AG04450 (cell line): ENCODE measurements at regions of chr6 and their contacts with region 1.

Region 1: DNA sequence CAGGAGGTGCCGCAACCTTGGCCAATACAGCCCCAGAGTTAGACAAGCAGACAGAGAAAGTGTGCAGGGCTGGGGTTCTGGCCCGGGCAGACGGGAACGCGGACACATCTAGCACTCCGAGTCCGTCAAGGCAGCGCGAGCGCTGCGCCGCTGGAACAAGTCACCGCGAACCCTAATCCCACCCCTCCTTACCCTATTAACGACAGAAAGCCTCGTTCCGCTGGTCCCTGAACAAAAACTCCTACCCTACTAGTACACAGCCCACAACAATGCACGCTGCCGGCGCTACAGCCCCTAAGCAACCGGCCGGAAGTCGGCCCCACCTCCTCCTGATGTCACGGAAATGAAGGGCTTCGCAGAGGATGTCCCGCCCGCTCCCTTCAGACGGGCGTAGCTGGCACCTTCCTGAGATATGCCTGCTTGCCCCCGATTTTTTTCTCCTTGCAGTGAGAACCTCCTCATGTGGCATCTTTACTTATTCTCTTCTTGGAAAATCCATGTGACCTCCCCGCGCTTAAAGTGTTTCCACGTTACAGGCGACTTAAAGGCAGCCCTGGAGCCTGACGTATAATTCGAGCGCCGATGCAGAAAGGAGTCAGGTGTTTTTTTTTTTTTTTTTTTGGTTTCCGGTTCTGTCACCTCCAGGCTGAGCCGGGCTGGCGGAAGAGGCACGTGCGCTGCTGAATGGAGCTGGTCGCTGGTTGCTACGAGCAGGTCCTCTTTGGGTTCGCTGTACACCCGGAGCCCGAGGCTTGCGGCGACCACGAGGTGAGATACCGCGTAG is at the starts of genes C6orf52 and PAK1IP1:
- DNase-seq: peak; percentile 80
- H3K4me3 ChIP-seq: peak within 1 kb of the TSS; percentile 77
- H3K27ac ChIP-seq: peak within 1 kb of the TSS; percentile 95
- H3K27me3 ChIP-seq: no peaks in the 10 kb centered on the region
- CTCF ChIP-seq: no peak
- polyA plus RNA-seq, gene C6orf52: 0.63 and 0.74 TPM in 2 replicates
- polyA plus RNA-seq, gene PAK1IP1: 18.7 and 24.2 TPM in 2 replicates

Region 2: GRCh38 chr6:10487668-10488327 is 206.7 kb before region 1 on chr6:
- CTCF ChIA-PET with region 1: no interaction called
- POLR2A ChIA-PET with region 1: interaction called, 10 read pairs
- DNase-seq: no peak
- H3K4me3 ChIP-seq: no peak overlapping the region
- H3K27ac ChIP-seq: no peak overlapping the region
- H3K27me3 ChIP-seq: peaks cover 4% of the 10 kb centered on the region
- CTCF ChIP-seq: no peak

Region 3: DNA sequence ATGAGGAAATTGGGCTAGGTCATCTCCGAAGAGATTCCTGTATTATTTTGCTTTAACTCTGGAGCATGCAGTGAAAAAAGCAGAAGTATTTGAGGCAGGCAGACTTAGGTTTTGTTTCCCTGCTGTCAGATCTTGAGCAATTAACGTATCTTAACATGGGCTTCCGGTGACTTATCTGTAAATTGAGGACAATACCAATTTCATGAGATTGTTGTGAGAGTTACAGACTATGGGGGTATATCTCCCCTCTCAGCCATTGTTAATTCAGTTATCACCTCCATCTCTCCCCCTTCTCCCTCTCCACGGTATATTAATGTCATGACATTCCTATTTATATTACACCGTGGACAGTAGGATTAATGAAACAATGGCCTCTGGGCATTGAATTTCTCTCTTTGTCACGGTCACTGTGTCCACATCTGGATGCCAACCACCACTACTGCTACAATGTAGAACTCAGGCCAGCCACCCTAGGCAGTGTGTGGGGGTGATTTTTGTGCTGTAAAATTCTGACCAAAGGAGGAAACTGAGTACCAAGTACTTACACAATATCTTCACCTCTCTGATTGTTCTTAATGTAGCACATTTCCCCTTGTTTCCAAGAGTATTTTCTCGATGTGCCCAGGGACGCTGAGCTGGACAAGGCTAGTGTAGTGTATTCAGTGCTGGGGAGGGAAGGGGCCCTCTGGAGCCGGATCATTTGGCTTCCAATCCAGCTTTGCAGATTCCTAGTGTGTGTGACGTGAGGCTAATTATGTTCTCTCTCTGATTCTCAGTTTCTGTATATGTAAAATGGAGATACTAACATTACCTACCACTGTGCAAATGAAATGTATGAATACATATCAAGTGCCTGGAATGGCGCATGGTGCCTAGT is 96.2 kb before region 1 on chr6:
- CTCF ChIA-PET with region 1: no interaction called
- POLR2A ChIA-PET with region 1: no interaction called
- DNase-seq: no peak
- H3K4me3 ChIP-seq: no peak overlapping the region
- H3K27ac ChIP-seq: no peak overlapping the region
- H3K27me3 ChIP-seq: no peaks in the 10 kb centered on the region
- CTCF ChIP-seq: no peak

Region 4: GRCh38 chr6:10722820-10723566 is 28.5 kb after region 1 on chr6 and contains the start of gene TMEM14C:
- CTCF ChIA-PET with region 1: interaction called, 5 read pairs
- POLR2A ChIA-PET with region 1: interaction called, 40 read pairs
- DNase-seq: peak; percentile 97
- H3K4me3 ChIP-seq: peak within 1 kb of the TSS; percentile 77
- H3K27ac ChIP-seq: peak within 1 kb of the TSS; percentile 77
- H3K27me3 ChIP-seq: no peaks in the 10 kb centered on the region
- CTCF ChIP-seq: no peak
- polyA plus RNA-seq, gene TMEM14C: 284 and 385 TPM in 2 replicates

Region 5: DNA sequence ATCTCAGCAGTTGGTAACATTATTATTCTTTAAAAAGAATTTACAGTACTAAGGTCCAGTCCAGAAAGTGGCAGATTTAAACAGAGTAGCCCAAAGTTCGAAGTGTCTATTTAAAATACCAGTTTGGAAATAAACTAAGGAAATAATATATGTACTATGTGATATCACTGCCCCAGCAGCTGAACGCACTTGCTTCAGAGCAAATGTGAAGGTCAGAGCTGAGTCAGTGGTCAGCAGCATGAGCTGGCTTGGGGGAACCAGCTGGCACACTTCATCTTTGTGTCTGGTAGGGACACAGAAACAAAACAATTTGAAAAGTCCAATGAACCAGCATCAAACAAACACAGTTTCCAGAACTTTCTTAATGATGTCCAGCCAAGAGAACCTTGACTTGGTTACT is 68.5 kb after region 1 on chr6:
- CTCF ChIA-PET with region 1: no interaction called
- POLR2A ChIA-PET with region 1: no interaction called
- DNase-seq: peak; percentile 55
- H3K4me3 ChIP-seq: no peak overlapping the region
- H3K27ac ChIP-seq: no peak overlapping the region
- H3K27me3 ChIP-seq: no peaks in the 10 kb centered on the region
- CTCF ChIP-seq: no peak

Region 6: GRCh38 chr6:10779076-10779475 is 84.6 kb after region 1 on chr6:
- CTCF ChIA-PET with region 1: no interaction called
- POLR2A ChIA-PET with region 1: no interaction called
- DNase-seq: no peak
- H3K4me3 ChIP-seq: no peak overlapping the region
- H3K27ac ChIP-seq: no peak overlapping the region
- H3K27me3 ChIP-seq: no peaks in the 10 kb centered on the region
- CTCF ChIP-seq: no peak